ENCODE measurements at regions of chr19 and their contacts with region 1.

Region 1: DNA sequence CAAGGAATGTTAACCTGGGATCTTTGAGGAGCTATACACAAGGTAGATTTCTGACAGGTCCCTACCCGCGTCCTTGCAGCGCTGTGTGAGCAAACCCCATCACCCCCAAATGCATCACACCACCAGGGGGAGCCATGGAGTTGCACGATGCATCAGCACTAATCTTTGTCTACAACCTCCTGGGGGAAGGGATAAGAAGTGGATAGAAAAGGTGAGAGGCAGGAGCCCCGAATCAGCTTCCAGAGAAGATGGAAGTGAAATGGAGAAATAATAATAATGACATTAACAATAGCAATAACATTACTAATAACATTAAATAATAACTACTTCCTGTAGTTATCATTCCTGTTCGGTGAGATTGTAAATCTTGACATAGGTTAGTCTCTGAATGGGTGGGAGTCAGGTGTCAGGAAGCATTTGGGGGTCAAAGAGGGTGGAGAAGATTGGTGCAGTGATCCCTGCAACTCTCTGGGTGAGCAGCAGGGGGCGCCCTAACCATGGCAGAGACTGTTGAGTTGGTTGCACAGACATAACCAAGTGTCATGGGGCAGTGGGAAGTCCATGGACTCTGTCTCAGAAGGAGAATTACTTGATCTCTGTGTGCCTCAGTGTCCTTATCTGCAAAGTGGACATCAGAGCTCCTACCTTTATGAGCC is 16.5 kb downstream of the SIGLEC7 start:
- DNase-seq: peak; percentile 49 to 88 (median 79)
- ATAC-seq: peak; percentile 67
- H3K4me3 ChIP-seq: no peak overlapping the region
- H3K4me3 Mint-ChIP-seq: no peak overlapping the region
- H3K27ac ChIP-seq: no peak overlapping the region
- H3K27ac Mint-ChIP-seq: no peak overlapping the region
- H3K4me1 ChIP-seq: peaks cover 5% of the 10 kb centered on the region
- H3K4me1 Mint-ChIP-seq: peaks cover 7% of the 10 kb centered on the region
- H3K27me3 ChIP-seq: no peaks in the 10 kb centered on the region
- H3K27me3 Mint-ChIP-seq: no peaks in the 10 kb centered on the region
- CTCF ChIP-seq: peak; percentile 96

Region 2: GRCh38 chr19:51097166-51097738 is 61.4 kb before region 1 on chr19:
- CTCF ChIA-PET with region 1: interaction called, 10 read pairs
- POLR2A ChIA-PET with region 1: no interaction called
- intact Hi-C with region 1: no loop called
- DNase-seq: peak; percentile 44 to 82 (median 71)
- ATAC-seq: peak; percentile 27
- H3K4me3 ChIP-seq: no peak overlapping the region
- H3K4me3 Mint-ChIP-seq: peak overlapping the region; percentile 38
- H3K27ac ChIP-seq: peak overlapping the region; percentile 23 to 53
- H3K27ac Mint-ChIP-seq: peak overlapping the region; percentile 79
- H3K4me1 ChIP-seq: peaks cover 21% of the 10 kb centered on the region
- H3K4me1 Mint-ChIP-seq: peaks cover 28% of the 10 kb centered on the region
- H3K27me3 ChIP-seq: no peaks in the 10 kb centered on the region
- H3K27me3 Mint-ChIP-seq: no peaks in the 10 kb centered on the region
- CTCF ChIP-seq: peak; percentile 51

Region 3: DNA sequence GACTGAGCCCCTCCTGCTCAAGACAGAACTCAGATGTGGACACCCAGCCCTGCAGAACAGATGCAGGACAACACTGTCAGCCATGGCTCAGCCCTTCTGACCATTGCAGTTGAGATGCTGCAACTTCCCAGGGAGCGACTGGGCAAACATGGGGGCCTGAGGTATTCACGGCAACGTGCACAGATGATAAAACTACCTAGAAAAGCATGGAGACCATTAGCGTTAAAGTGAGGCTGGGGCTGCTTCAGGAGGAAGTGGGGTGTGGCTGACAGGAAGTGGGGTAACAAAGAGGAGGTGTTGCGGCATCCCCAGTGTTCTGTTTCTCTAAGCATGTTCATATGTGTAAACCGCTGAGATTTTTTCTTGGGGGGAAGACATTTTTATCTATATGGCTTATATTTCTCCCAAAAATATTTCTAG is 35.2 kb before region 1 on chr19:
- CTCF ChIA-PET with region 1: interaction called, 3 read pairs
- POLR2A ChIA-PET with region 1: interaction called, 3 read pairs
- intact Hi-C with region 1: loop called in 1 of 2 experiments (anchors 5 kb)
- DNase-seq: peak in 8 of 9 experiments; percentile 37 to 85 (median 65)
- ATAC-seq: peak; percentile 93
- H3K4me3 ChIP-seq: peak overlapping the region; percentile 21 to 39
- H3K4me3 Mint-ChIP-seq: peak overlapping the region; percentile 67
- H3K27ac ChIP-seq: peak overlapping the region; percentile 38 to 81
- H3K27ac Mint-ChIP-seq: peak overlapping the region; percentile 80
- H3K4me1 ChIP-seq: peaks cover 83% of the 10 kb centered on the region
- H3K4me1 Mint-ChIP-seq: peaks cover 80% of the 10 kb centered on the region
- H3K27me3 ChIP-seq: no peaks in the 10 kb centered on the region
- H3K27me3 Mint-ChIP-seq: no peaks in the 10 kb centered on the region
- CTCF ChIP-seq: no peak

Region 4: DNA sequence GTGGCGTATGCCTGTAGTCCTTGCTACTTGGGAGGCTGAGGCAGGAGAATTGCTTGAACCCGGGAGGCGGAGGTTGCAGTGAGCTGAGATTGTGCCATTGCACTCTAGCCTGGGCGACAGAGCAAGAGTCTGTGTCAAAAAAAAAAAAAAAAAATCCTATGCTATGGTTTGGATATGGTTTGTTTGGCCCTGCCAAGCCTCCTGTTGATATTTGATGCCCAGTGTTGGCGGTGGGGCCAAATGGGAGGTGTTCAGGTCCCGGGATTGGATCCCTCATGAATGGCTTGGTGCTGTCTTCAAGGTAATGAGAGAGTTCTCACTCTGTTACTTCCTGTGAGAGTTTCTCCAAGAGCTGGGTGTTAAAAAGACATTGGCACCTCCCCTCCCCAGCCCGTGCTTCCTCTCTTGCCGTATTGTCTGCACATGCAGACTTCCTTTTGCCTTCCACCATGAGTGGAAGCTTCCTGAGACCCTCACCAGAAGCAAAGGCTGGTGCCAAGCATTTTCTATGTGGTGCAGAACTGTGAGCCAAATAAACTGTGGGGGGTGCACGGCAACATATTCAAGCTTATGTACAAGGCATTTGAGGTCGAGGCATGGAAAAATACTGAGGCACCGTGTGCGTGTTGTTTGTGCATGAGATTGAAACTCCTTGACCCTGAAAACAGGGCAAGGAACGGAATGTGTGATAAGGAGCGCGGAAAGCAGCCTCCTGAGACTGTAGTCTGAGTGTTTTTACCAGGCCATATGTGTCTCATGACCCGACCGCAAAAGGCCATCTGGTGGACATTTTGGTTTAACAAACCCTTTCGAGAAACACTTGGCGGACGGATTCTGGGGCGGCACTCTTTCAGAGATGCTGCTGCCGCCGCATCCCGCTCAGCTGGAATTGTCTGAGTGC is 26.6 kb before region 1 on chr19:
- CTCF ChIA-PET with region 1: interaction called, 14 read pairs
- POLR2A ChIA-PET with region 1: no interaction called
- intact Hi-C with region 1: no loop called
- DNase-seq: peak in 6 of 9 experiments; percentile 28 to 75 (median 55)
- ATAC-seq: peak; percentile 69
- H3K4me3 ChIP-seq: peak overlapping the region in 1 of 2 experiments; percentile 7
- H3K4me3 Mint-ChIP-seq: peak overlapping the region; percentile 76
- H3K27ac ChIP-seq: peak overlapping the region in 1 of 2 experiments; percentile 55
- H3K27ac Mint-ChIP-seq: peak overlapping the region; percentile 82
- H3K4me1 ChIP-seq: peaks cover 63% of the 10 kb centered on the region
- H3K4me1 Mint-ChIP-seq: peaks cover 61% of the 10 kb centered on the region
- H3K27me3 ChIP-seq: no peaks in the 10 kb centered on the region
- H3K27me3 Mint-ChIP-seq: no peaks in the 10 kb centered on the region
- CTCF ChIP-seq: no peak

Region 5: DNA sequence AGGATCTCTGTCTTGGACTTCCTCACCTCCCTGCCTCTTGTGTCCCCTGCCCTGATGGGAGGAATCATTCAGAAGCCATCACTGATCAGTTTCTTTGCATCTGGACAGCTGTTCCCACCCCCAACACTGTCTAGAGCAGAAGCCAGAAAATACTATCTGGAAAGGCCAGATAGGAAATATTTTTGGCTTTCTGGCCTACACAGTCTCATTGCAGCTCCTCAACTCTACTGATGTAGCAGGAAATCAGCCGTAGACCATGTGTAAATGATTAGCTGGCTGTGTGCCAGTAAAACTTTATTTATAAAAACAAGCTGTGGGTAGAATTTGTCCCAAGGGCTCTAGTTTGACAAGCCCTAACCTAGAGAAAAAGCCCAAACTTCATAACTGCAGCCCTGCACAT is 10.9 kb before region 1 on chr19:
- CTCF ChIA-PET with region 1: interaction called, 12 read pairs
- POLR2A ChIA-PET with region 1: no interaction called
- intact Hi-C with region 1: no loop called
- DNase-seq: no peak
- ATAC-seq: no peak
- H3K4me3 ChIP-seq: no peak overlapping the region
- H3K4me3 Mint-ChIP-seq: no peak overlapping the region
- H3K27ac ChIP-seq: peak overlapping the region in 1 of 2 experiments; percentile 50
- H3K27ac Mint-ChIP-seq: peak overlapping the region; percentile 11
- H3K4me1 ChIP-seq: peaks cover 4% of the 10 kb centered on the region
- H3K4me1 Mint-ChIP-seq: peaks cover 14% of the 10 kb centered on the region
- H3K27me3 ChIP-seq: no peaks in the 10 kb centered on the region
- H3K27me3 Mint-ChIP-seq: no peaks in the 10 kb centered on the region
- CTCF ChIP-seq: no peak

Region 6: GRCh38 chr19:51168564-51169282 is 10.1 kb after region 1 on chr19:
- CTCF ChIA-PET with region 1: interaction called, 26 read pairs
- POLR2A ChIA-PET with region 1: no interaction called
- intact Hi-C with region 1: loop called in 1 of 2 experiments (anchors 1 kb)
- DNase-seq: no peak
- ATAC-seq: no peak
- H3K4me3 ChIP-seq: no peak overlapping the region
- H3K4me3 Mint-ChIP-seq: no peak overlapping the region
- H3K27ac ChIP-seq: no peak overlapping the region
- H3K27ac Mint-ChIP-seq: no peak overlapping the region
- H3K4me1 ChIP-seq: peaks cover 27% of the 10 kb centered on the region
- H3K4me1 Mint-ChIP-seq: peaks cover 28% of the 10 kb centered on the region
- H3K27me3 ChIP-seq: no peaks in the 10 kb centered on the region
- H3K27me3 Mint-ChIP-seq: no peaks in the 10 kb centered on the region
- CTCF ChIP-seq: no peak